Dendritic cell treated with granulocyte-macrophage colony-stimulating factor and Interleukin-4, amounts not matched to agents 40 ng/mL and 50 ng/mL, for 4 days (primary cell): ENCODE measurements at regions of chr4 and their contacts with region 1.

Region 1: DNA sequence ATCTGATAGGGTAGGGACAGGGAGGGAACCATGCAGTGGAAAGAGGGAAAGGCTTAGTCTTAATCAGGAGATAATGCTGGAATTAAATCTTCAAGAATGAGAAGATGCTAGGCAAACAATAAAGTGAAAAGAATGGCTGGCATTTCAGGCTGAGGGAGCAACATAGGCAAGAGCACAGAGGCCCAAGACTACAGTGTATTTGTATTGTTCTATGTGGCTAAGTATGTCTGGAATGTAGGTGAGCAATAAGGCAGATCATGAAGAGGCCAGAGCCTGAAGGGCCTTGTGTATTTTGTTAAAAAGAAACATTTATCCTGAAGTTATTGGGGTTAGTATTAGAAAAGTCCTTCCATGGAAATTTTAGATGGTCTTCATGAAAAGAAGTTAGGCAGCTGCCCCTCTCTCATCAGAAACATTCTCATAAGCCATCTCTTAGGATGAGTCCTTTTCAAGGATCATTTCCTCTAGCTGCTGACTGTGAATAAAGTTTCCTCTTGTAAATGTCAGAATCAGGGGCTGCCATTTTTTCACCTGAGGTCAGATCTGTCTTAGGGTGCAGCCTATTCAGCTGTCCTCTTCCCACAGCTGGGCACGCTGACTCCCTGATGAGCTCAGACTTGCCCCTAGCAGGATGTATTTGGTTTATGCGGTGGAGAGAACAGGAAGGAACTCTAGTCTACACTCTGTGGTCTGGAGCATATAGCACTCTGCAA is 46.3 kb downstream of the ATP10D start:
- H3K4me3 Mint-ChIP-seq: no peak overlapping the region
- H3K27ac Mint-ChIP-seq: no peak overlapping the region
- H3K4me1 Mint-ChIP-seq: peaks cover 35% of the 10 kb centered on the region
- H3K27me3 Mint-ChIP-seq: no peaks in the 10 kb centered on the region

Region 2: GRCh38 chr4:46765465-46765864 is 765.9 kb before region 1 on chr4:
- intact Hi-C with region 1: loop called (anchors 10 kb)
- H3K4me3 Mint-ChIP-seq: no peak overlapping the region
- H3K27ac Mint-ChIP-seq: no peak overlapping the region
- H3K4me1 Mint-ChIP-seq: no peaks in the 10 kb centered on the region
- H3K27me3 Mint-ChIP-seq: no peaks in the 10 kb centered on the region